Right cardiac atrium (tissue), 5 donors: ENCODE measurements at regions of chr16 and their contacts with region 1.

Region 1: DNA sequence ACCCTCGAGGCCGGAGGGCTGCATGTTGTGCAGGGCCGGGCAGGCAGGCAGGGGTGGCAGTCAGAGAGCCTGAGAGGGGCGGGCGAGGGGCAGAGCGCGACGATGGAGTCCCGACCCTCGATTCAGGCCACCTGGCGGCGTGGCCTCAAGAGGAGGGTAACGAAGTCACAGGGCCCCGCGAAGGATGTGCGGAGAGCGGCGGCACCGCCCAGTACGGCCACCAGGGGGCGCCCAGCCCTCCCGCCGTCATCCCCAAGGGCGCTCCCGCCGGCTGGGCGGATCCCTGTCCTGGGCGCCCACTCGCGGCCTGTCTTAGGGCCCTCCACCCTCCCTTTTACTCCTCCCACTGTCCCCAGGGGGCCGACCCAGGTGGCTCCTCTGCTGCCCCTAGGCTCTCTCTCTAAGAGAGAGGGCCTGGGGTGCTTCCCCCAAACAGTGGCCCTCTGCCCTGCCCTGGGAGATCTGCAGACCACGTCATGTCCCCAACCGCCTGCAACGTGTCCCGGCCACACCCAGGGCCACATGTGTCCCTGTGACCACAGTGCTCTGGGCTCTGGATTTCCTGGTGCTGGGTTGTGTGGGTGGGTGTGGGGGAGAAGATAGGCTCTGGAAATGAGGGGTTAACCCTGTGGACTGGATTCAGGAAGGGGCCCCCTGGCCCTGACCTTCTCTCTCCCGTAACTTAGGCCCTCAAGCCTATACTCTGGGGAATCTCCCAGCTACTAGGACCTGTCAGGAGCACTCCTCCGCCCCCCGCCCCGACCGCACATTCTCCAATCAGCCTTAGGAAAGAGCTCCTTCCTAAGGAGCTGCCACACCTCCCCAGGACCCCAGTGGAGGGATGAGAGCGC is 5.9 kb downstream of the DPEP2 start:
- DNase-seq: peak; percentile 88 to 96 (median 94)
- ATAC-seq: peak; percentile 93
- H3K4me3 ChIP-seq: peak overlapping the region; percentile 31
- H3K27ac ChIP-seq: peak overlapping the region; percentile 16
- H3K4me1 ChIP-seq: peaks cover 4% of the 10 kb centered on the region
- H3K27me3 ChIP-seq: no peaks in the 10 kb centered on the region

Region 2: GRCh38 chr16:68064791-68065365 is 71.5 kb after region 1 on chr16:
- intact Hi-C with region 1: loop called in 1 of 4 experiments (anchors 2 kb)
- DNase-seq: peak; percentile 69 to 88 (median 87)
- ATAC-seq: peak; percentile 78 to 82
- H3K4me3 ChIP-seq: no peak overlapping the region
- H3K27ac ChIP-seq: peak overlapping the region; percentile 78
- H3K4me1 ChIP-seq: peaks cover 6% of the 10 kb centered on the region
- H3K27me3 ChIP-seq: no peaks in the 10 kb centered on the region

Region 3: GRCh38 chr16:68223072-68223471 is 229.7 kb after region 1 on chr16:
- intact Hi-C with region 1: loop called in 2 of 4 experiments (anchors 2 to 10 kb)
- DNase-seq: no peak
- ATAC-seq: no peak
- H3K4me3 ChIP-seq: no peak overlapping the region
- H3K27ac ChIP-seq: no peak overlapping the region
- H3K4me1 ChIP-seq: no peaks in the 10 kb centered on the region
- H3K27me3 ChIP-seq: no peaks in the 10 kb centered on the region

Region 4: DNA sequence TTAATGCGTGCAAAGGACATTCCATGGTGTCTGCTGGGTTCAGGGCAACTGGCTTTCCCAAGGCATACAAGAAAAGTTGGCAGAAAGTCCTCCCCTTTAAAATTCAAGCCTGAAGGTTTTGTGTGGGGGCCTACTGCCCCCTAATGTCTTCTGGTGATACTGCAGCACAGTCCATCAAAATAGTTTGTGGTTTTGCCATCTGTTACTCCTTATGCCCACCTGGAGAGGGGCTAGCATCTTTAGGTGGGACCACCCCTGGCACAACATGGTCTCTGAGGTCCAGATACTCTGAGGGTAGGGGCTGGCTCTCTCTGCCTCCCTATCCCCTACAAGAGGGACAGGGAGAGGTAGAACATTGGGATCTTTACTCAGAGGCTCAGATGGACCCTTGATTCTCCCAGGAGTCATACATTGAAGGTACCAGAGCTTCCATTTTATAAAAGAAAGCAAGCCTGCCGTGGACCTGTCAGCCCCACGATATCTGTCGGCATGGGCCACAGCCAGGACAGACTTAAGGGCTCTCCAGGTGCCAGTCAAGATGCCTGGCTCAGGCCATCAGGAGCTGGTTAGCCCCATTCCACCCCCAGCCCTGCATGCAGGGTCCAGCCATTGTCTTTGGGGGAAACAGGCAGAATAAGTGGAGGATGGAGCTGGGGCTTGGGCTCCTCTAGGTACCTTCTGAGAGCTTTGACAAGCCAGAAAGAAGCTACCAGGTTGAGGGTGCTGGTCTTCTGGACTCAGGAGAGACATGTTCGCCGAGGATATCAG is 236.2 kb after region 1 on chr16:
- intact Hi-C with region 1: loop called in 2 of 4 experiments (anchors 10 kb)
- DNase-seq: no peak
- ATAC-seq: peak in 1 of 2 donors; percentile 33
- H3K4me3 ChIP-seq: no peak overlapping the region
- H3K27ac ChIP-seq: no peak overlapping the region
- H3K4me1 ChIP-seq: no peaks in the 10 kb centered on the region
- H3K27me3 ChIP-seq: no peaks in the 10 kb centered on the region

Region 5: GRCh38 chr16:68237243-68238028 is 244.0 kb after region 1 on chr16:
- intact Hi-C with region 1: loop called in 1 of 4 experiments (anchors 10 kb)
- DNase-seq: peak; percentile 98 to 99 (median 99)
- ATAC-seq: peak; percentile 91 to 93
- H3K4me3 ChIP-seq: peak overlapping the region; percentile 67
- H3K27ac ChIP-seq: peak overlapping the region; percentile 50
- H3K4me1 ChIP-seq: no peaks in the 10 kb centered on the region
- H3K27me3 ChIP-seq: no peaks in the 10 kb centered on the region